ENCODE measurements at regions of chr7 and their contacts with region 1.

Region 1: GRCh38 chr7:22885797-22886261 is 63.2 kb upstream of the TOMM7 start:
- DNase-seq: peak; percentile 90
- H3K4me3 Mint-ChIP-seq: peak overlapping the region; percentile 66
- H3K27ac Mint-ChIP-seq: peak overlapping the region; percentile 93
- H3K4me1 Mint-ChIP-seq: peaks cover 43% of the 10 kb centered on the region
- H3K27me3 Mint-ChIP-seq: no peaks in the 10 kb centered on the region

Region 2: GRCh38 chr7:22640269-22640668 is 245.6 kb before region 1 on chr7:
- intact Hi-C with region 1: loop called (anchors 1 kb)
- DNase-seq: peak; percentile 74
- H3K4me3 Mint-ChIP-seq: no peak overlapping the region
- H3K27ac Mint-ChIP-seq: no peak overlapping the region
- H3K4me1 Mint-ChIP-seq: peaks cover 10% of the 10 kb centered on the region
- H3K27me3 Mint-ChIP-seq: peaks cover 30% of the 10 kb centered on the region

Region 3: GRCh38 chr7:22822486-22823141 is 63.2 kb before region 1 on chr7 and contains the start of gene TOMM7:
- intact Hi-C with region 1: loop called (anchors 2 kb)
- DNase-seq: peak; percentile 95
- H3K4me3 Mint-ChIP-seq: peak within 1 kb of the TSS; percentile 99
- H3K27ac Mint-ChIP-seq: peak within 1 kb of the TSS; percentile 97
- H3K4me1 Mint-ChIP-seq: peaks cover 32% of the 10 kb centered on the region
- H3K27me3 Mint-ChIP-seq: peaks cover 25% of the 10 kb centered on the region
- total RNA-seq, gene TOMM7: 196 and 201 TPM in 2 replicates

Region 4: GRCh38 chr7:22962775-22963358 is 77.0 kb after region 1 on chr7:
- intact Hi-C with region 1: no loop called
- DNase-seq: no peak
- H3K4me3 Mint-ChIP-seq: no peak overlapping the region
- H3K27ac Mint-ChIP-seq: no peak overlapping the region
- H3K4me1 Mint-ChIP-seq: no peaks in the 10 kb centered on the region
- H3K27me3 Mint-ChIP-seq: no peaks in the 10 kb centered on the region

Region 5: GRCh38 chr7:22992874-22993840 is 107.3 kb after region 1 on chr7:
- intact Hi-C with region 1: loop called (anchors 2 kb)
- DNase-seq: peak; percentile 72
- H3K4me3 Mint-ChIP-seq: peak overlapping the region; percentile 8
- H3K27ac Mint-ChIP-seq: peak overlapping the region; percentile 61
- H3K4me1 Mint-ChIP-seq: peaks cover 42% of the 10 kb centered on the region
- H3K27me3 Mint-ChIP-seq: no peaks in the 10 kb centered on the region

Region 6: GRCh38 chr7:23055582-23056178 is 169.9 kb after region 1 on chr7:
- intact Hi-C with region 1: loop called (anchors 1 kb)
- DNase-seq: peak; percentile 90
- H3K4me3 Mint-ChIP-seq: no peak overlapping the region
- H3K27ac Mint-ChIP-seq: no peak overlapping the region
- H3K4me1 Mint-ChIP-seq: peaks cover 6% of the 10 kb centered on the region
- H3K27me3 Mint-ChIP-seq: peaks cover 11% of the 10 kb centered on the region

Measured in activated CD4-positive, alpha-beta T cell treated with anti-CD3 and anti-CD28 coated beads, Interleukin-2, amount 10 ng/mL, durations not matched to agents 24 days and 14 days (primary cell).